CD8-positive, alpha-beta T cell (primary cell): ENCODE measurements at regions of chr5 and their contacts with region 1.

Region 1: GRCh38 chr5:32329308-32329834 is 16.6 kb upstream of the MTMR12 start:
- DNase-seq: peak; percentile 27 to 74 (median 51)
- ATAC-seq: peak; percentile 83
- H3K4me3 ChIP-seq: no peak overlapping the region
- H3K4me3 Mint-ChIP-seq: no peak overlapping the region
- H3K27ac ChIP-seq: no peak overlapping the region
- H3K27ac Mint-ChIP-seq: no peak overlapping the region
- H3K4me1 ChIP-seq: no peaks in the 10 kb centered on the region
- H3K4me1 Mint-ChIP-seq: peaks cover 2% of the 10 kb centered on the region
- H3K27me3 ChIP-seq: no peaks in the 10 kb centered on the region
- H3K27me3 Mint-ChIP-seq: no peaks in the 10 kb centered on the region
- CTCF ChIP-seq: peak; percentile 61

Region 2: GRCh38 chr5:32174011-32174870 is 155.1 kb before region 1 on chr5 and contains the start of gene GOLPH3:
- CTCF ChIA-PET with region 1: no interaction called
- POLR2A ChIA-PET with region 1: no interaction called
- intact Hi-C with region 1: no loop called
- DNase-seq: peak; percentile 79 to 94 (median 92)
- ATAC-seq: peak; percentile 86
- H3K4me3 ChIP-seq: peak within 1 kb of the TSS; percentile 91 to 94
- H3K4me3 Mint-ChIP-seq: peak within 1 kb of the TSS; percentile 97
- H3K27ac ChIP-seq: peak within 1 kb of the TSS; percentile 95 to 97
- H3K27ac Mint-ChIP-seq: peak within 1 kb of the TSS; percentile 98
- H3K4me1 ChIP-seq: peaks cover 20% of the 10 kb centered on the region
- H3K4me1 Mint-ChIP-seq: peaks cover 37% of the 10 kb centered on the region
- H3K27me3 ChIP-seq: no peaks in the 10 kb centered on the region
- H3K27me3 Mint-ChIP-seq: peaks cover 4% of the 10 kb centered on the region
- CTCF ChIP-seq: no peak
- total RNA-seq, gene GOLPH3: 48.3 to 51.2 TPM

Region 3: DNA sequence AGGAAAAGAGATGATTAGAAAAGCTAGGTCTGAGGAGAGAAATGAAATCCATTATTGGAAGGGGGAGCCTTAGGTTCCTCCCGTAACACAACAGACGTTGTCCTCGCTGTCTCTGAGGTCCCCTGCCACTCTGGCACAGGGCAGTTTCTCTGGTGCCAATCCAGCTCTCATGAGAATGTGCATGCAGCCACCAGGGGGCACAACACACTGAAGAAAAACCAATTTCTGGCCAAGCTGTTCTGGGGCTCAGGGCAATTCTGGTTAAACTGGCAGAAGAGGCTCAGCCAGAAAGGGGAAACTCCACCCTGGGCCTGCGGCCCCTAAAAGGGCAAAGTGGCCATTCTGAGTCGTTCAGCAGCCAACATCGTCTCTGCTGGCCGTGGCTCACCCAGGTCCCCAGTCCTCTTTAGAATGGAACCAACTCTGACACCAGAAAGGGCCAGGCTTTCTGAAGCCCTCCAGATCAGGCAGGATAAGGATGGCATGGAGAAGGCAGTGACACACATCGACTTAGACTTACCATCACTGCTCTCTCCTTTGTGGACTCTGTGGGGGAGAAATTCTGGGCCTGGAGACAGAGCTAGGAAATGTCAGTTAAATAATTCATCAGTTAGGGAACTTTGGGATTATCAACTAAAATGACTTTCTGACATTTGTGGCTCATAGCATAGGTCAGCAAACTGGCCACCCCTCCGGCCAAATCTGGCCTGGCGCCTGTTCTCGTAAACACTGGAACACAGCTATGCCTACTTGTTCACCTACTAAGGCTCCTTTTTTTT is 96.7 kb before region 1 on chr5:
- CTCF ChIA-PET with region 1: interaction called, 213 read pairs
- POLR2A ChIA-PET with region 1: no interaction called
- intact Hi-C with region 1: loop called (anchors 1 kb)
- DNase-seq: peak; percentile 54 to 86 (median 76)
- ATAC-seq: peak; percentile 88
- H3K4me3 ChIP-seq: no peak overlapping the region
- H3K4me3 Mint-ChIP-seq: no peak overlapping the region
- H3K27ac ChIP-seq: peak overlapping the region in 1 of 2 experiments; percentile 23
- H3K27ac Mint-ChIP-seq: peak overlapping the region; percentile 79
- H3K4me1 ChIP-seq: no peaks in the 10 kb centered on the region
- H3K4me1 Mint-ChIP-seq: no peaks in the 10 kb centered on the region
- H3K27me3 ChIP-seq: no peaks in the 10 kb centered on the region
- H3K27me3 Mint-ChIP-seq: no peaks in the 10 kb centered on the region
- CTCF ChIP-seq: peak; percentile 61

Region 4: GRCh38 chr5:32241034-32241783 is 88.2 kb before region 1 on chr5:
- CTCF ChIA-PET with region 1: interaction called, 17 read pairs
- POLR2A ChIA-PET with region 1: no interaction called
- intact Hi-C with region 1: no loop called
- DNase-seq: peak in 3 of 9 experiments; percentile 21 to 85 (median 65)
- ATAC-seq: peak; percentile 40
- H3K4me3 ChIP-seq: peak overlapping the region in 1 of 2 experiments; percentile 2
- H3K4me3 Mint-ChIP-seq: no peak overlapping the region
- H3K27ac ChIP-seq: peak overlapping the region; percentile 36 to 89
- H3K27ac Mint-ChIP-seq: peak overlapping the region; percentile 7
- H3K4me1 ChIP-seq: no peaks in the 10 kb centered on the region
- H3K4me1 Mint-ChIP-seq: peaks cover 16% of the 10 kb centered on the region
- H3K27me3 ChIP-seq: no peaks in the 10 kb centered on the region
- H3K27me3 Mint-ChIP-seq: no peaks in the 10 kb centered on the region
- CTCF ChIP-seq: no peak

Region 5: DNA sequence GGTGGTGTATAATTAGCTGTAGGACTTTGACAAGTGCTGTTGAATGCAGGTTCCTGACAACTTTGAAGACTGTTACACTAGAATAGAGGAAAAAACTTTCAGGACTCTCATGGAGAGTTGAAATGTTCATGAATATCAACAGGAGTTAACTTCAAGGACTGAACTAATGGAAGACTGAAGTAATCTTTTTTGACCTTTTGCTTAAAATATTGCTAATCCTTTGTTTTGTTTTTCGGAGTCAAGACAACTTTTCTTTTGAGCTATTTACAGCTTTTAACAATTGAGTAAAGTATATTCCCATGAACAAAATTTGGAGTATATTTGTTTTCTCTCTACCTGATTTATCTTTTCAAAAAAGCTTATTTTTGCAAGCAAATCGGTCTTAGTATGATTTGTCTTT is 17.5 kb after region 1 on chr5:
- CTCF ChIA-PET with region 1: interaction called, 12 read pairs
- POLR2A ChIA-PET with region 1: no interaction called
- intact Hi-C with region 1: no loop called
- DNase-seq: no peak
- ATAC-seq: no peak
- H3K4me3 ChIP-seq: no peak overlapping the region
- H3K4me3 Mint-ChIP-seq: no peak overlapping the region
- H3K27ac ChIP-seq: no peak overlapping the region
- H3K27ac Mint-ChIP-seq: no peak overlapping the region
- H3K4me1 ChIP-seq: no peaks in the 10 kb centered on the region
- H3K4me1 Mint-ChIP-seq: no peaks in the 10 kb centered on the region
- H3K27me3 ChIP-seq: no peaks in the 10 kb centered on the region
- H3K27me3 Mint-ChIP-seq: no peaks in the 10 kb centered on the region
- CTCF ChIP-seq: no peak

Region 6: DNA sequence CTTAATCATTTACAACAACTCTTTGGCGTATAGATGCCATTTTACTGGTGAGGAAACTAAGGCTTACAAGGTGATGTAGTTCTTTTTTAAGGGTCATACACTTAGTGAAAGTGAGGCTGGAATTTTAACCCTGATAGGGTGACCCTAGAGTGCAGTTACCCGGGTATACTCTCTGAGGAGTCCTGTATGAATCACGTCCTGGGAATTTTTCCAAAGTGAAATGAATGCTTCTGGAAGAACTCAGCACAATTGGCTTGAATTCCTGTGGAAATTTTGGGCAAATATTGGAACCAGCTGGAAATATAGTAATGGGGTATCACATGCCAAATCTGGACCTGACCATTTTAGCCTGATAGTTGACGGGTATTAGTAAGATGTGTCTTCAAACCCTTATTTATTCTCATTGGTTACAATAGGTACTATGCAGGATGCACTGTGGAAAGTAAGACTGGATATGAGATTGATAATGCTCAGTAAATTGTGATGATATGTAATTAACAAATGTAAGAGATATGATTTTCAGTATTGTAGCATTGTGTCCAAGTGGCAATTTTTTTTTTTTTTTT is 270.8 kb after region 1 on chr5:
- CTCF ChIA-PET with region 1: no interaction called
- POLR2A ChIA-PET with region 1: no interaction called
- intact Hi-C with region 1: no loop called
- DNase-seq: no peak
- ATAC-seq: no peak
- H3K4me3 ChIP-seq: no peak overlapping the region
- H3K4me3 Mint-ChIP-seq: no peak overlapping the region
- H3K27ac ChIP-seq: no peak overlapping the region
- H3K27ac Mint-ChIP-seq: no peak overlapping the region
- H3K4me1 ChIP-seq: peaks cover 23% of the 10 kb centered on the region
- H3K4me1 Mint-ChIP-seq: peaks cover 67% of the 10 kb centered on the region
- H3K27me3 ChIP-seq: no peaks in the 10 kb centered on the region
- H3K27me3 Mint-ChIP-seq: no peaks in the 10 kb centered on the region
- CTCF ChIP-seq: no peak